ENCODE measurements at regions of chr4 and their contacts with region 1.

Region 1: GRCh38 chr4:57110640-57111511 is 691 bp upstream of the IGFBP7 start:
- DNase-seq: no peak
- H3K4me3 ChIP-seq: peak overlapping the region; percentile 64
- H3K4me3 Mint-ChIP-seq: peak overlapping the region; percentile 80
- H3K27ac Mint-ChIP-seq: peak overlapping the region; percentile 87
- H3K4me1 ChIP-seq: 0 out of 2 replicates have a peak, but pooled peaks cover 3% of the 10 kb centered on the region
- H3K4me1 Mint-ChIP-seq: peaks cover 31% of the 10 kb centered on the region
- H3K27me3 ChIP-seq: no peaks in the 10 kb centered on the region
- H3K27me3 Mint-ChIP-seq: no peaks in the 10 kb centered on the region
- CTCF ChIP-seq: no peak

Region 2: GRCh38 chr4:56712049-56712448 is 398.8 kb before region 1 on chr4:
- CTCF ChIA-PET with region 1: no interaction called
- POLR2A ChIA-PET with region 1: no interaction called
- intact Hi-C with region 1: no loop called
- DNase-seq: no peak
- H3K4me3 ChIP-seq: no peak overlapping the region
- H3K4me3 Mint-ChIP-seq: no peak overlapping the region
- H3K27ac Mint-ChIP-seq: no peak overlapping the region
- H3K4me1 ChIP-seq: no peaks in the 10 kb centered on the region
- H3K4me1 Mint-ChIP-seq: no peaks in the 10 kb centered on the region
- H3K27me3 ChIP-seq: no peaks in the 10 kb centered on the region
- H3K27me3 Mint-ChIP-seq: peaks cover 5% of the 10 kb centered on the region
- CTCF ChIP-seq: no peak

Region 3: DNA sequence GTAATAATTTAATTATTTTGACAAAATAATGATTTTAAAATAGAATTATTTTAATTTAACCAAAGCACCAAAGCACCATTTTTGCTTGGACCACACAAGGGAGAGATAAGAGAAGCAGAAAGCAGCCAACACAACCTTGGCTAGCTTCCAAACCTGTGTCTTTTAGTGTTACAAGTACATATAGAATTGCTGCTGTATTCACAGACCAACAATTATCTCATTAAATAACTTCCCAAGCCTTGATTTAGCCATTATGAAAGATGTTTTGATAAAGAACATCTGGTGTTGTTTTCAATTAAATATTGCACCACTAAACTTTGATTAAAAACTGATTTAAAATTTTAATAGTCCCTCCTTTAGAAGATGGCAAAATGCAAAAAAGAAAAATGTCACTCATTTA is 13.3 kb after region 1 on chr4:
- CTCF ChIA-PET with region 1: no interaction called
- POLR2A ChIA-PET with region 1: no interaction called
- intact Hi-C with region 1: no loop called
- DNase-seq: no peak
- H3K4me3 ChIP-seq: no peak overlapping the region
- H3K4me3 Mint-ChIP-seq: no peak overlapping the region
- H3K27ac Mint-ChIP-seq: no peak overlapping the region
- H3K4me1 ChIP-seq: peaks cover 9% of the 10 kb centered on the region
- H3K4me1 Mint-ChIP-seq: peaks cover 9% of the 10 kb centered on the region
- H3K27me3 ChIP-seq: no peaks in the 10 kb centered on the region
- H3K27me3 Mint-ChIP-seq: no peaks in the 10 kb centered on the region
- CTCF ChIP-seq: no peak

Region 4: DNA sequence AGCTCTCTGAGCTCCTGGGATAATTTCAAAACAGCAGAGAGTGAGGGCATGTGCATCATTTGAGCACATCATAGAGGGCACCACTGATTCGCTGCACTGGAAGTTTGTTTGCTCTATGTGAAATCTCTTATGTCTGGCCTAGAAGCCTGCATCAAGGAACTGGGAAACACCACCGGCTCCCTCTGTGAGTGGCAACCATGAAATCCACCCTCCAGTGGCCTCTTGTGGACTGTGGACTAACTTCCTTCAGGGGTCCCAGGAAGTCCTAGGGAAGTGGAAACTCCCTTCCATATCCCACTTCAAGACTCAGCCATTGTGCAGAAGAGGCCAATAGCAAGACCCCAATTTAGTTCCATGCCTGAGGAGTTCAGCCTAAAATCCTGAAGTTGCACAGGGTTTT is 47.3 kb after region 1 on chr4:
- CTCF ChIA-PET with region 1: interaction called, 3 read pairs
- POLR2A ChIA-PET with region 1: no interaction called
- intact Hi-C with region 1: loop called (anchors 5 kb)
- DNase-seq: peak in 1 of 2 experiments; percentile 32
- H3K4me3 ChIP-seq: no peak overlapping the region
- H3K4me3 Mint-ChIP-seq: no peak overlapping the region
- H3K27ac Mint-ChIP-seq: no peak overlapping the region
- H3K4me1 ChIP-seq: peaks cover 4% of the 10 kb centered on the region
- H3K4me1 Mint-ChIP-seq: peaks cover 6% of the 10 kb centered on the region
- H3K27me3 ChIP-seq: no peaks in the 10 kb centered on the region
- H3K27me3 Mint-ChIP-seq: no peaks in the 10 kb centered on the region
- CTCF ChIP-seq: peak in 1 of 2 experiments; percentile 35